Endothelial cell of umbilical vein (primary cell): ENCODE measurements at regions of chr10 and their contacts with region 1.

Region 1: DNA sequence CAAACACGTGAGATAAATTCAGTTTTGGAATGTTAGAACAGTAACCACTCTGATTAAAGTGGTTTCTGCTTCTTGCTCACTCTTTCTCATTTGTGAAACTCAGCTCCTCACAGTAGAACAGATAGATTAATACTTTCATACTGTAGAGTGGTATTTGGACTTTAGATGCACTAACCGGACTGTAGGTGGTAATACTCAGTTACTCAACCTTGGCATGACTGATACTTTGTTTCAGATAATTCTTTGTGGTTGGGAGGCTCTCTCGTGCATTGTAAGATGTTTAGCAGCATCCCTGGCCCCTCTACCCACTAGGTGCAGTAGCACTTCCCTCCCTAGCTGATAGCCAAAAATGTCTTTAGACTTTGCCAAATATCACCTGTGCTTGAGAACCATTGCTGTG is 37.6 kb downstream of the MCU start:
- DNase-seq: no peak
- H3K4me3 ChIP-seq: no peak overlapping the region
- H3K27ac ChIP-seq: no peak overlapping the region
- H3K4me1 ChIP-seq: no peaks in the 10 kb centered on the region
- H3K27me3 ChIP-seq: no peaks in the 10 kb centered on the region
- CTCF ChIP-seq: no peak
- POLR2A ChIP-seq: no peak

Region 2: GRCh38 chr10:72702868-72703581 is 26.5 kb before region 1 on chr10:
- CTCF ChIA-PET with region 1: no interaction called
- POLR2A ChIA-PET with region 1: no interaction called
- dilution Hi-C with region 1: no loop called
- intact Hi-C with region 1: loop called (anchors 1 kb)
- DNase-seq: peak; percentile 49
- H3K4me3 ChIP-seq: no peak overlapping the region
- H3K27ac ChIP-seq: no peak overlapping the region
- H3K4me1 ChIP-seq: peaks cover under 1% of the 10 kb centered on the region
- H3K27me3 ChIP-seq: no peaks in the 10 kb centered on the region
- CTCF ChIP-seq: no peak
- POLR2A ChIP-seq: no peak